Left ventricle myocardium superior (tissue), 1 donor: ENCODE measurements at regions of chr7 and their contacts with region 1.

Region 1: DNA sequence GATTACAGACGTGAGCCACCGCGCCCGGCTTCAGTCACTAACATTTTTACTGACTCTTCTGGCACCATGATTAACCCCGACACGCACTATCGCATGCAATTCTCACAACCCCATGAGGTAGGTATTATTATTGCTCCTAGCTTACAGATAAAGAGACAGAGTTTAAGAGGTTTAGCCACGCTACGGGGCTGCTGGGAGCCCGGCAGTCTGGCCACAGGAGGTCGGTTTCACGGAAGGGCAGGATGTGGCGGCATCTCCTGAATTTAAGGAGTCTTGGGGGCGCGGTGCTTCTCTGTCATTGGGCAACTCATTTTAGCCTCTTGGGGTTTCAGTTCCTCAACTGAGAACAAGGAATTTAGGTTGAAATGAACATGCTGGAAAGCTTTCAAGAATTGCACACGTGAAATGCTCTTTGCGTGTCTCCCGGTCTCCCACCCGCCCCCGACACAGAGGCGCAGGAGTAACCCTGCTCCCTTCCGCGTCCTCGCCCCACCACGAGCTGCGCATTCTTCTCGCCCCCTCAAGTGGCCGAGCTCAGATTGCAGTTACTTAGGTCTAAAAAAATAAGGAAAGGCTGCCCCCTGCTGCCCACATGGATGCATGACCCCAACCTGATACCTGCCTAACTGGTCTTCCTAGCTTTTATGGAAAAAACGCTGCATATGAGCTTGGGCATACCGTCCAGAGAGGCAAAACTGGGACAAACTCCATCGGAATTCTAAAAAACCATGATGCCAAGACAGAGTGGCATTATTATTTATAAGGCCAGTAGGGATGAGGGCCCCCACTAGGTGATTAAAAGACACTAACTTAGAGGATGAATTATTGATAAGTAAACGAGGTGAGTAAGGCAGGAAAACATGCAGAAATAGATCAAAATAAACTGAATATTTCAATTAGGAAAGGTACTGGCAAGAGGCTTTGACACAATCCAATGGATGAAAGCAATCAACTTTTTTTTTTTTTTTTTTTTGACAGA is 12.4 kb downstream of the PRSS2 start:
- DNase-seq: peak; percentile 89
- ATAC-seq: peak; percentile 94

Region 2: DNA sequence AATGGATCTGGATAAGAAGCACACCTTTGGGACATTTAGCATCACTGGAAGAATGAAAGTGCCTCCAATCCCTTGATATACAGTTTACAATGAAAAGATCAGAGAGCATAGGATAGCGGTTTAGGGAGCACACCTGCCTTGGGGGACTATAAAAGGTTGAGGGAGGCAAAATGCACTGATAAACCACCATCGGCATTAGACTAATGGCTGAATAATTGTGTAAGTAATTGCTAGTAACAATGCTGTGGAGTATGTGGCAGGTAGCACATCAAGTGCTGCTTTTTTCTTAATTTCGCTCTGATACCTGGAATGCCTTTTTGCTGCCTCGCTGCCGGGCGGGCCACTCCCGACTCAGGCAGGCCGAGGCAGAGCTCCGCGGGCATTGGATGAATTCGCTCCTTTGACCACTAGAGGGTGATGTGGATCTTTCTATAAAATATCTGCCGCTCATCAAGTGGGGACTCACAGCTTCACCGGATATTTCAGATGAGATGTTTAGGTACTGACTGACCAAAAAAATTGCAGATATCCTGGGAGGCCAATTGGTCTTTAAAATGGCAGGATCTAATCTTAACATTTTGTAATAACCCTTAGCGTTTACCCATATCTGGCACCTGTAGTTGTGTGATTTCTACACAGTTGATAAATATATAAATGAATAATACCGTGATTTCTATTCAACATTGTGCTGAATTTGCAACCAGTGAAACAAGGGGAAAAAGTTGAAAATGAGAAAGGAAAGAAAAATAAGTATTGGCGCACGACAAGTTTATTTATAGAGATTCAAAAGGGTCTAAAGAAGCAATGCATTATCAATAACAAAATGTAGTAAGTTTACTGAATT is 150.7 kb before region 1 on chr7:
- intact Hi-C with region 1: loop called (anchors 10 kb)
- DNase-seq: peak; percentile 39
- ATAC-seq: peak; percentile 75

Region 3: DNA sequence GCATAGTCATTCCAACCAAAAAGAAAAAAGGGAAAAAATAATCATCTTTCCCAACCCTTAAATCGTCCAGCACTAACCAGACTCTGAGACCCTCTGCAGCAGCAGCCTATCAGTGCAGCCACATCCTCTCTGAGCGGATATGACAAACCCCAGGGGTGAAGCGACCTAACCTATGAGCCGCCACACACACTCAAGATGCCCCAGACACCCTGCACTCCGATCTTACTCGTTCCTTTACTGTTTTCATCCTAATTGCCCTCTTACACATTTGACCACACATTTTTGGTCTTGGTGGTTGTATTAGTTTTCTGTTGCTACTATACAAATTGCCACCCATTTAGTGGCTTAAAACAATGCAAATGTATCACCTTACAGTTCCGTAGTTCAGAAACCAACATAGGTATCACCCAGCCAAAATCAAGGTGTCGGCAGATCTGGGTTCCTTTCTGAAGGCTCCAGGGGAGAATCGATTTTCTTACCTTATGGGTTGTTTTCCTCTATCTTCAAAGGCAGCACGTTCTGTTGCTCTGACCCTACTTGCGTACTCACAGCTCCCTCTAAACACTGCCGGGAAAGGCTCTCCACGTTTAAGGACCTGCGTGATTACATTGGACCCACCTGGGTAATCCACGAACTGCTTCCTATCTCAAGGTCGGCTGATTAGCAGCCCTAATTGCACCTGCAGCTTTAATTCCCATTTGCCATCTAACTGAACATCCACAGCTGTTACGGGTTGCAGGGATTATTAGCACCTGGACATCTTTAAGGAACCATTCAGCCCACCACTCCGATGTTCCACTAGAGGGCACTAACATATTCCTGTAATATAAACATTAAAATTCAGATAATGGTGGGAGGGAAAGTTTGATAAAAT is 71.2 kb before region 1 on chr7:
- intact Hi-C with region 1: loop called (anchors 1 kb)
- DNase-seq: no peak
- ATAC-seq: no peak